ENCODE measurements at regions of chr12 and their contacts with region 1.

Region 1: GRCh38 chr12:53267999-53268647 is at the start of gene ESPL1:
- DNase-seq: peak; percentile 87
- H3K4me3 Mint-ChIP-seq: peak within 1 kb of the TSS; percentile 98
- H3K27ac Mint-ChIP-seq: peak within 1 kb of the TSS; percentile 90
- H3K4me1 Mint-ChIP-seq: peaks cover 53% of the 10 kb centered on the region
- H3K27me3 Mint-ChIP-seq: no peaks in the 10 kb centered on the region
- total RNA-seq, gene ESPL1: 88.4 to 90.2 TPM

Region 2: DNA sequence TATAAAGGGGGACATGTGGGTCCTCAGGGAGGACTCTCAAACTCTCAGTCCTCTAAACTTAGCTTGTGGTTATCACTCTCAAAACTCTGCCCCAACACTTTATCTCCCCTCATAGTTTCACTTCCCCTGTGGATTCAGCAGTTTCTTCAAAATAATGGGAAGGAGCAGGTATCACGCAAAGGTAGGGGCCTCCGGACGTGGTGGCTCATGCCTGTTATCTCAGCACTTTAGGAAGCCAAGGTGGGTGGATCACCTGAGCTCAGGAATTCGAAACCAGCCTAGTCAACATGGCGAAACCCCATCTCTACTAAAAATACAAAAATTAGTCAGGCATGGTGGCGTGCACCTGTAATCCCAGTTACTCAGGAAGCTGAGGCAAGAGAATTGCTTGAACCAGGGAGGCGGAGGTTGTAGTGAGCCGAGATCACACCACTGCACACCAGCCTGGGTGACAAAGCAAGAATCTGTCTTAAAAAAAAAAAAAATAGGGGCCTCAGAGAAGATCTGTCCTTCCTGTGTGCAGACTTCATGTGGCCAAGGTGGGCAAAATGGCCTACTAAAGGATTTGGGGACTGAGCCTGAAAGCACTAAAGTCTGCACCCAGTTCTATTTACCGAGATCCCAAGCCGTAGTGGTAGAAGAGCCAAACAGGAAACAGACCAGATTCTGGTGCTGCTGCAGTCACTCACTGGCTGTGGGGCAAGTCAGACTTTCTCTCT is 67.5 kb before region 1 on chr12:
- CTCF ChIA-PET with region 1: interaction called, 3 read pairs
- POLR2A ChIA-PET with region 1: interaction called, 19 read pairs
- DNase-seq: peak; percentile 47
- H3K4me3 Mint-ChIP-seq: peak overlapping the region; percentile 66
- H3K27ac Mint-ChIP-seq: peak overlapping the region; percentile 84
- H3K4me1 Mint-ChIP-seq: peaks cover 84% of the 10 kb centered on the region
- H3K27me3 Mint-ChIP-seq: no peaks in the 10 kb centered on the region

Region 3: GRCh38 chr12:53220801-53221202 is 47.3 kb before region 1 on chr12:
- CTCF ChIA-PET with region 1: interaction called, 211 read pairs
- POLR2A ChIA-PET with region 1: interaction called, 93 read pairs
- DNase-seq: peak; percentile 88
- H3K4me3 Mint-ChIP-seq: peak overlapping the region; percentile 93
- H3K27ac Mint-ChIP-seq: peak overlapping the region; percentile 96
- H3K4me1 Mint-ChIP-seq: peaks cover 80% of the 10 kb centered on the region
- H3K27me3 Mint-ChIP-seq: no peaks in the 10 kb centered on the region

Region 4: DNA sequence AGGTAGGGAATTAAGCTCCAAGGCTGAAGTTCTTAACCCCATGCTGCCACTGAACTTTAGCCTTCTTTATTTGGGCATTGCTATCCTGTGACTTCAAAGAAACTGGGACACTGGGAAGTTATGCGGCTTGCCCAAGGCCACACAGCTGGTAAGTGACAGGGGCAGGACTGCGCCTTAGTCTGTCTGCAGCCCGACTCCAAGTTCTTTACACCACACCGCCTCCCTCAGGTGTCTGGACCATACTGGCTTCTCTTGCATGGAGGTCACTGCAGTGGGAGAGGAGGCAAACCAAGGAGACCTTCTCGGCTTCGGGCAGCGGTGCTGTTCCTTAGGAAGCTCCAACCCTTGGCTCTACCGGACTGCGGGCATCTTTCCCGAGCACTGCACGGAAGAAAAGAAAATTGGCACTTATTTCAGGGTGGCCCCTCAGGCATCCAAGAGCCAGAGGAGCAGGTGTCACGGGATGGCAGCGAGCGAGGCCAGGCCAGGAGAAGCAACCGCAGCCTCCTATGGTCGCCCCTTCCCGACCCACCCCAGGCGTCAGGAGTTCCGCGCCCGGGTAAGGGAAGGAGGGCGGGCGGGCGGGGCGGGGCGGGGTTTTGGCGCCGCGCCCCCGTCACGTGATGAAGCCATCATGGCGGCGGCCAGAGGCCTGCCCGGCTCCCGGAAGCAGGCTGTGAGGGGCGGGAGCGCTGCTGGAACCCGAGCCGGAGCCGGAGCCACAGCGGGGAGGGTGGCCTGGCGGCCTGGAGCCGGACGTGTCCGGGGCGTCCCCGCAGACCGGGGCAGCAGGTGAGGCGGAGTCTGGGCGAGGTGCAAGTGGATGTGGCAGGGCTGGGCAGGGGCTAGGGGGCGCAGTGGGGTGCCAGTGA is 16.4 kb before region 1 on chr12:
- CTCF ChIA-PET with region 1: interaction called, 46 read pairs
- POLR2A ChIA-PET with region 1: interaction called, 33 read pairs
- DNase-seq: peak; percentile 79
- H3K4me3 Mint-ChIP-seq: peak overlapping the region; percentile 97
- H3K27ac Mint-ChIP-seq: peak overlapping the region; percentile 81
- H3K4me1 Mint-ChIP-seq: peaks cover 52% of the 10 kb centered on the region
- H3K27me3 Mint-ChIP-seq: no peaks in the 10 kb centered on the region

Region 5: GRCh38 chr12:53287741-53288216 is 19.7 kb after region 1 on chr12:
- CTCF ChIA-PET with region 1: interaction called, 21 read pairs
- POLR2A ChIA-PET with region 1: interaction called, 19 read pairs
- DNase-seq: peak; percentile 76
- H3K4me3 Mint-ChIP-seq: no peak overlapping the region
- H3K27ac Mint-ChIP-seq: peak overlapping the region; percentile 45
- H3K4me1 Mint-ChIP-seq: peaks cover 12% of the 10 kb centered on the region
- H3K27me3 Mint-ChIP-seq: no peaks in the 10 kb centered on the region